Lower leg skin (tissue), 4 donors: ENCODE measurements at regions of chr11 and their contacts with region 1.

Region 1: DNA sequence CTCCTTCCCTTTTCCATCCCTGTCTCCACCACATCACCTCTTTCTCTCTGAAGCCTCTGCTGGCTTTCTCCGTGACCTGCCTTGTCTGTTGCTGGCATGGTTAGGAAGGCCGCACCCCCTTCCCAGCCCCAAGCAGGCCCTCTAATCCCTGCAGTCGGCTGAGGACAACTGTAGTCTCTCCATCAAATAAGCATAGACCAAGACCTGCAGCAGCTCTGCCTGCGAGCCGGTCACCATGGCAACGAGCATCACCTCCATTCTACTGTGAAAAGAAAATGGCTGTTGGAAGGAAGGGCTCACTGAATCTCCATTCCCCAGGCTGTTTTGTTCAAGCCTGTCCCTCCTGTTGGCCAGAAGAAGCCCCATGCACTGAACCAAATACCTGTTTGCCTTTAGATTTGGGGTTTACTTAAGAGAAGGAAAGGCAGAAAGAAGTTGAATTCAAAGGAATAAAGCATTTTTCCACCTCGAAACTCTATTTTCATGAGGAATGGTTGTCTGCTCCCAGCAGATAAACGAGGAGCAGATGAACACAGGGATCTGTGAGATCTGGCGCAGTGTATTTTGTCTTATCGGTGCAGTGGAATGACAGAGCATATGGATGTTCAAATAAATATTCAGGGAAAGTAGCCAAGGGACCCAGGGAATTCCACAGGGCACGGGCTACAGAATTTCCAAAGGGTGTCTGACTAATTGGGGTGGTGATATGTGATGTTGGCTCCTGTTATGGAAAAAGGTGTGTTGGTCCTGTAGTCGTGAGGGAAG is 113.1 kb upstream of the TTC12 start:
- DNase-seq: no peak
- H3K4me3 ChIP-seq: no peak overlapping the region
- CTCF ChIP-seq: no peak
- POLR2A ChIP-seq: no peak

Region 2: GRCh38 chr11:112707681-112708080 is 493.6 kb before region 1 on chr11:
- intact Hi-C with region 1: no loop called
- DNase-seq: no peak
- H3K4me3 ChIP-seq: no peak overlapping the region
- CTCF ChIP-seq: no peak
- POLR2A ChIP-seq: no peak

Region 3: DNA sequence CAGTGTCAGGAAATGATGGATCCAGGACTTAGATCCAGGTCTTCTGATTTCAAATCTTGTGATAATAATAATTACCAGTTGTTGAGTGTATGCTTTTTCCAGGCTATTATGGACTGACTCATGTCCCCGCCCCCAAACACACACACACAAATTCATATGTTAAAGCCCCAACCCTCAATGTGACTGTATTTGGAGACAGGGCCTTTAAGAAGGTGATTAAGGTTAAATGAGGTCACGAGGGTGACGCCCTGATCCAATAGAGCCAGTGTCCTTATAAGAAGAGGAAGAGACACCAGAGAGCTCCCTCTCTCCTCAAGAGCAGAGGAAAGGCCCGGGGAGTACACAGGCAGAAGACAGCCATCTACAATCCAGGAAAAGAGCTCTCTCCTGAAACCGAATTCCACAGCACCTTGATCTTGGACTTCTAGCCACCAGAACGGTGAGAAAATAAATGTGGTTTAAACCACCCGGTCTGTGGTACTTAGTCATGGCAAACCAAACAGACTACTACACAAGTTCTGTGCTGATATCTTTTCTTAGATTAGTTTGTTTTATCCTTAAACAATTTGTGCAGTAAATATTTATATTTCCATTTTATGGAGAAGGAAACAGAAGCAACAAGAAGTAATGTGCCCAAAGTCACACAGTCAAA is 496.6 kb after region 1 on chr11:
- intact Hi-C with region 1: loop called (anchors 5 kb)
- DNase-seq: no peak
- H3K4me3 ChIP-seq: no peak overlapping the region
- CTCF ChIP-seq: no peak
- POLR2A ChIP-seq: no peak